ENCODE measurements at regions of chr13 and their contacts with region 1.

Region 1: GRCh38 chr13:102913914-102914313 is 68.1 kb downstream of the ERCC5 start:
- DNase-seq: peak; percentile 84
- H3K4me3 Mint-ChIP-seq: no peak overlapping the region
- H3K27ac Mint-ChIP-seq: no peak overlapping the region
- H3K4me1 Mint-ChIP-seq: peaks cover 30% of the 10 kb centered on the region
- H3K27me3 Mint-ChIP-seq: no peaks in the 10 kb centered on the region
- CTCF ChIP-seq: no peak

Region 2: DNA sequence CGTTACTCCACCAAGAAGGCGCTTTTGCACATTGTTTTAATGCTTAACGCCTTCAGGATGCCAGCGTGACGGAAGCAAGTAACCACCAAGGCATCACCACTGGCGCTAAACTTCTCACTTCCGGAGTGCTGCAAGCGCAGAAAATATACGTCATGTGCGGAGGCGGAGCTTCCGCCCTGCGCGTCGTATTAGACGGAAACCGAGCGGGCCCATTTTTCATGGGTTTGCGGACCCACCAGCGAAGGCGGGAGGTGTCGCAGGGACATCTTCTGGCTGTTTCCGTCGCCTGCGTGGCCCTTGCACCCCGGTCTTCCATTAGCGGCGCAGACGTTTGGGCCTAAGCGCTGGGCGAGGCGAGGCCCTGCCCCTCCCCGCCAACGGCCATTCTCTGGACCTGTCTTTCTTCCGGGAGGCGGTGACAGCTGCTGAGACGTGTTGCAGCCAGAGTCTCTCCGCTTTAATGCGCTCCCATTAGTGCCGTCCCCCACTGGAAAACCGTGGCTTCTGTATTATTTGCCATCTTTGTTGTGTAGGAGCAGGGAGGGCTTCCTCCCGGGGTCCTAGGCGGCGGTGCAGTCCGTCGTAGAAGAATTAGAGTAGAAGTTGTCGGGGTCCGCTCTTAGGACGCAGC is 68.2 kb before region 1 on chr13 and contains the start of gene ERCC5:
- CTCF ChIA-PET with region 1: no interaction called
- POLR2A ChIA-PET with region 1: interaction called, 22 read pairs
- intact Hi-C with region 1: no loop called
- DNase-seq: peak; percentile 96
- H3K4me3 Mint-ChIP-seq: peak within 1 kb of the TSS; percentile 83
- H3K27ac Mint-ChIP-seq: peak within 1 kb of the TSS; percentile 90
- H3K4me1 Mint-ChIP-seq: peaks cover 20% of the 10 kb centered on the region
- H3K27me3 Mint-ChIP-seq: no peaks in the 10 kb centered on the region
- CTCF ChIP-seq: no peak
- total RNA-seq, gene ERCC5: 68.1 and 68.8 TPM in 2 replicates

Region 3: GRCh38 chr13:102870677-102871415 is 43.1 kb before region 1 on chr13:
- CTCF ChIA-PET with region 1: interaction called, 13 read pairs
- POLR2A ChIA-PET with region 1: interaction called, 3 read pairs
- intact Hi-C with region 1: no loop called
- DNase-seq: peak; percentile 54
- H3K4me3 Mint-ChIP-seq: no peak overlapping the region
- H3K27ac Mint-ChIP-seq: no peak overlapping the region
- H3K4me1 Mint-ChIP-seq: peaks cover 5% of the 10 kb centered on the region
- H3K27me3 Mint-ChIP-seq: no peaks in the 10 kb centered on the region
- CTCF ChIP-seq: peak; percentile 75

Region 4: DNA sequence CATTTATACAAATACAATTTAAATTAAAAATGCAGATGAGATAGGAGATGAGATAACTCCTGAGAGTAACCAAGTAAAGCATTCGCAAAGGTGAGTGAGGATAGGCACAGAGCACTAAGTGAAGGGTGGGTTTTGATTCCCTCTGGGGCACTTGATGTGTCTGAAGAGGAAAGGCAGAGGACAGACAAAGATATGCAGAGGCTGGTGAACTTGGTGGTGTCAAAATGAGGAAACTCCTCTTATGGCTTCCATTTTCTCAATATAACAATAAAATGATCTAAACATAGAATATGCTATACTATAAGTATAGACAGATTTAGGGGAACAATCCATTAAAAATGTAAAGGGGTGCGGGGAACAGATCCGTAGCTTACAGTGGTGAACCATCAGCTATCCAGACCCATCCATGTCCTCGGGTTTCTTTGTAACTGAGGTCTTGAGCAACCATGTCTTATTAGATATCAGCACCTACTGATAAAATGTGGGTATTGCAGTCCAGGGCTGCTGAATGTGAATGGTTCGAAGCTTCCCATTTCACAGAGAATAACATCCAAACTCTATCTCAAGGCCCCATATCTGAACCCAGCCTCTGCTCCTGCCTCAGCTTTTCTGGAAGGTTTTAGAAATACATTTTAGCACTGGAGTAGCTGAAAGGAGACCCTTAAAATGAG is 226.2 kb after region 1 on chr13:
- CTCF ChIA-PET with region 1: interaction called, 21 read pairs
- POLR2A ChIA-PET with region 1: interaction called, 3 read pairs
- intact Hi-C with region 1: loop called (anchors 1 kb)
- DNase-seq: peak; percentile 50
- H3K4me3 Mint-ChIP-seq: no peak overlapping the region
- H3K27ac Mint-ChIP-seq: no peak overlapping the region
- H3K4me1 Mint-ChIP-seq: no peaks in the 10 kb centered on the region
- H3K27me3 Mint-ChIP-seq: no peaks in the 10 kb centered on the region
- CTCF ChIP-seq: peak; percentile 41

Region 5: DNA sequence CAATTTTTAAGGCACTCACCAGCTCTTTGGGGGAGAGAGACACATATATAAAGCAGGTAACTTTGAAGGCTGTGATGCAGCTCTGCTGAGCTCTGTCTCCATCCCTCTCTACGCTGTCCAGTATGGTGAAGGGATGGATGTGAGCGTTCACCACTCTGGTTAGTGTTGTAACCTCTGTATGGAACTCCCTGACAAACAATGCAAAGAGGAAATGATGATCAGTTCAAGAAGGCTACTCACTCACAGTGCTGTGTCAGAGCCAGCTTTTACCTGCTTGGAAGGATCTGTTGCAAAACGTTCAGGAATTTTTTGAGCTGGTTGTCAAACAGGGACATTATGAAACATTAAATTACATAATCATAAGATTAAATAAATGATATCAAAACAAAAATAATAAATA is 243.1 kb after region 1 on chr13:
- CTCF ChIA-PET with region 1: interaction called, 5 read pairs
- POLR2A ChIA-PET with region 1: interaction called, 15 read pairs
- intact Hi-C with region 1: no loop called
- DNase-seq: peak; percentile 88
- H3K4me3 Mint-ChIP-seq: no peak overlapping the region
- H3K27ac Mint-ChIP-seq: no peak overlapping the region
- H3K4me1 Mint-ChIP-seq: peaks cover 11% of the 10 kb centered on the region
- H3K27me3 Mint-ChIP-seq: no peaks in the 10 kb centered on the region
- CTCF ChIP-seq: no peak

Region 6: DNA sequence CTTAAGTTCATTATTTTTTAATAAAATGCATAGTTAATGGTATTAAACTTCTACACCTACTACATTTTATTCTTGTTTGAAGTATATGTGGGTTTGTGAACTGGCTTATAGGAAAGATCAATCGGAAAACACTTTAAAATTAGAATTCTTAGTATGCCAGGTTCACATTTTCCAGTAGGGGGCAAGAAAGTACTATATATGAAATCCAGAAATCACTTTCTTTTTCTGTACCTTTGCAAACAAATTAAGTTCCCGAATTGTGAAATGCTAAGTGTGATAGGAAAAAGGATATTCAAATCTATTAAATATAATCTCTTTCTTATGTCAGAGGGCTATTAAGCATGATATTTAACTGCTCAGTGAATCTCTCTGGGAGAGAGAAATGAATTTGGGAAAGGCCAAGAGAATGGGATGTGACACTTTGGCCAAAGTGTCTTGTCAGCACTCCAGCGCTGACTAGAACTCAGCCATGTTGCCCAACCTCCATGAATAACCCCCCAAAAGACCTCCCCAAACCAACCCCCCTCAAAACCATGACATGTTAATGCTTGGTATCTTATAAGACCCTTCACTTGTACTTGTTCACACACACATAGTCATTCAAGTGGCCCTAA is 274.9 kb after region 1 on chr13:
- CTCF ChIA-PET with region 1: interaction called, 4 read pairs
- POLR2A ChIA-PET with region 1: no interaction called
- intact Hi-C with region 1: loop called (anchors 1 kb)
- DNase-seq: peak; percentile 48
- H3K4me3 Mint-ChIP-seq: no peak overlapping the region
- H3K27ac Mint-ChIP-seq: no peak overlapping the region
- H3K4me1 Mint-ChIP-seq: peaks cover 6% of the 10 kb centered on the region
- H3K27me3 Mint-ChIP-seq: no peaks in the 10 kb centered on the region
- CTCF ChIP-seq: peak; percentile 54

Region 7: GRCh38 chr13:103246581-103247200 is 332.8 kb after region 1 on chr13:
- CTCF ChIA-PET with region 1: no interaction called
- POLR2A ChIA-PET with region 1: no interaction called
- intact Hi-C with region 1: no loop called
- DNase-seq: no peak
- H3K4me3 Mint-ChIP-seq: no peak overlapping the region
- H3K27ac Mint-ChIP-seq: no peak overlapping the region
- H3K4me1 Mint-ChIP-seq: peaks cover 11% of the 10 kb centered on the region
- H3K27me3 Mint-ChIP-seq: no peaks in the 10 kb centered on the region
- CTCF ChIP-seq: no peak

Region 8: DNA sequence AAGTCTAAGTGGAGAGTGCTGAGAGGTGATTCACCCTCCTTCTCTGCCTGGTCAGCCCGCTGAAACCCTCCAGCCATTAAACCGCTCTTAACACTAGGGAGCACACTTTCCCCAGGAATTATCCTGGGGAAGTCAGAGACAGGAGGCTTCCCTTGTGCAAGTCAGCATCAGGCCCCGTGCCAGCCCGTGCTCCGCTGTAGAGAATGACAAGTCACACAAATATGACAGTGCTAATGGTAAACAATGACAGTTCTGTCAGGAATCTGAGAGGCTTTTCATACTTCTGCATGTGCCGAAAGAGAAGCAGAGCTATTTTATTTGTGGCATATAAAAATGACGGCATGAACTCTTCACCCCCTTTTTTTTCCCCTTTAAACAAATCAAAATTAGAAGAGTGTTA is 969.2 kb after region 1 on chr13:
- CTCF ChIA-PET with region 1: interaction called, 4 read pairs
- POLR2A ChIA-PET with region 1: no interaction called
- intact Hi-C with region 1: loop called (anchors 10 kb)
- DNase-seq: peak; percentile 95
- H3K4me3 Mint-ChIP-seq: peak overlapping the region; percentile 57
- H3K27ac Mint-ChIP-seq: no peak overlapping the region
- H3K4me1 Mint-ChIP-seq: peaks cover 5% of the 10 kb centered on the region
- H3K27me3 Mint-ChIP-seq: no peaks in the 10 kb centered on the region
- CTCF ChIP-seq: peak; percentile 60